Caco-2 (cell line): ENCODE measurements at regions of chr4 and their contacts with region 1.

Region 1: DNA sequence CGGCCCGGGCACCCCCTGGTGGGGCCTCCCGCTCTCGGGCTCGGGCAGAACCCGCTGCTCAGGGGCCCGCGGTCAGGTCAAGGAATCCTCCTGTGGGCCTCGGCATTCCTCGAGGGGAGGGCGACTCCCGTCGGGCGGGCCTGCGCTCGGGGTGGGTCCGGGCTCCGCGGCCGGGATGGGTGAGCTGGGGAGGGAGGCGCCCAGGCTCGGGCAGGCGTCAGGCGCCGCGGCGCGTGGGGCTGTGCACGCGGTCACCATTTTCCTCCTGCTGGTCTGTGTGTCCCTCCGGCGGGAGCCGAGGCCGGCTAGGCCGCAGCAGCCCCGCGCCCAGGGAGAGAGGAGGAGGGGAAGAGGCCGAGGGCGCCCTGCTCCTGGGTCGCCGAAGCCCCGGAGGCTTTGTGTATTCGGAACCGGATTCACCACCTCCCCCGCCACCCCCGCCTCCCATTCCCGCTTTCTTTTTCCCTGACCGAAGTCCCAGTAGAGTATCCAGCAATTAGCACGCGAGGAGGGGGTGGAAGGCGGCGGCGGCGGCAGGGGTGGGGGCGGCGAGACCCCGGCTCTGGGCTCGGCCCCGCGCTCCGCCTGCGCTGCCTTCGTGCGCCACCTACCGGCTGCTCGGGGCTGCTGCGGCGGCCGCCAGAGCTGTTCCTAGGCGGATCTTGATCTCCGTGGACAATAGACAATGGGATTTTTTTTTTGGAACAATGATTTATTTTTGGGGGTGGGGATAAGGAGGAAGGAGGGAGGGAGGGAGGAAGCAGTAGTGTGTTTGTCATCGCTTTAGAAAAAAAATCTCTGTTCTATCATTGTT is 99.0 kb upstream of the MAML3 start:
- DNase-seq: peak; percentile 82 to 87
- H3K4me3 ChIP-seq: peak overlapping the region; percentile 66
- H3K4me3 Mint-ChIP-seq: peak overlapping the region; percentile 0
- H3K27ac Mint-ChIP-seq: peak overlapping the region; percentile 88
- H3K4me1 ChIP-seq: peaks cover 58% of the 10 kb centered on the region
- H3K4me1 Mint-ChIP-seq: peaks cover 26% of the 10 kb centered on the region
- H3K27me3 ChIP-seq: no peaks in the 10 kb centered on the region
- H3K27me3 Mint-ChIP-seq: no peaks in the 10 kb centered on the region
- CTCF ChIP-seq: peak; percentile 79 to 90

Region 2: DNA sequence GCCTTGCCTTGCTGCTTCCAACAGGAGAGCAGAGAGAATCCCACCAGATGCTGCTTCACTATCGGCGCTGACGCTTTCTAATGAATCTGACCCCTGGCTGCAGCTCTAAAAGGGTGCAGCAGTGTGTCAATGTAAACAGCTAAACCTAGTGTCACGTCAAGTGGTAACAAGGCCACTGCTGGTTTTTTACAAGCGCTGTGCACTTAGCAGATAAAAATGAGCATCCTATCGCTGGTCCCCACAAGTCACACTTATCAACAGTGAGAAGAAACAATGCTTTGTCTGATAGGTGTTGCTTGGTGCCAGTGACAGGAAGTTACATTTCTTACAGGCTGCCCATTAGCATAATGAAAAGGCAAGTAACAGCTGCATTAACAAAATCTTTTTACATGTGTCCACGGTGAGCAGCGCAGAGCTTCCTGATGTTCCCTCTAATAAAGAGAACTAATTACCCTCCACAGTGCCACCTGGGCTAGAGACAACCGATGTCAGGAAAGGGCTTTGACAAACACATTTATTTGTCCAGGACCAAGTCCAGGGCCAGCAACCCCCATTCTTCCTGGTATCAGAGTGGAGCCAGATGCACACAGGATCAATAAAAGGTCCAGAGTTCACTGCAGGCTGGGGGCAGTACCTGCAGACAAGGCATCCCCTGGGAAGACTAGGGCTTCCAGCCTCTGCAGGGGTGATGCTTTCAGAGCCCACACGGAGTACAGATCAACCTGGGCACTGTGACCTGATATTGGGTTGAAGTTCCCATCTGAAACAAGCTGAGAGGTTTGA is 411.3 kb before region 1 on chr4:
- CTCF ChIA-PET with region 1: no interaction called
- POLR2A ChIA-PET with region 1: no interaction called
- intact Hi-C with region 1: loop called (anchors 10 kb)
- DNase-seq: peak; percentile 56 to 71
- H3K4me3 ChIP-seq: no peak overlapping the region
- H3K4me3 Mint-ChIP-seq: peak overlapping the region; percentile 13
- H3K27ac Mint-ChIP-seq: no peak overlapping the region
- H3K4me1 ChIP-seq: peaks cover 16% of the 10 kb centered on the region
- H3K4me1 Mint-ChIP-seq: peaks cover 15% of the 10 kb centered on the region
- H3K27me3 ChIP-seq: no peaks in the 10 kb centered on the region
- H3K27me3 Mint-ChIP-seq: no peaks in the 10 kb centered on the region
- CTCF ChIP-seq: peak in 1 of 2 experiments; percentile 26

Region 3: GRCh38 chr4:140012688-140013486 is 240.1 kb before region 1 on chr4:
- CTCF ChIA-PET with region 1: interaction called, 23 read pairs
- POLR2A ChIA-PET with region 1: interaction called, 4 read pairs
- intact Hi-C with region 1: loop called (anchors 1 kb)
- DNase-seq: peak; percentile 69 to 77
- H3K4me3 ChIP-seq: no peak overlapping the region
- H3K4me3 Mint-ChIP-seq: peak overlapping the region; percentile 0
- H3K27ac Mint-ChIP-seq: peak overlapping the region; percentile 23
- H3K4me1 ChIP-seq: peaks cover 18% of the 10 kb centered on the region
- H3K4me1 Mint-ChIP-seq: peaks cover 30% of the 10 kb centered on the region
- H3K27me3 ChIP-seq: no peaks in the 10 kb centered on the region
- H3K27me3 Mint-ChIP-seq: no peaks in the 10 kb centered on the region
- CTCF ChIP-seq: peak; percentile 56 to 65

Region 4: GRCh38 chr4:140144917-140145316 is 108.0 kb before region 1 on chr4:
- CTCF ChIA-PET with region 1: no interaction called
- POLR2A ChIA-PET with region 1: no interaction called
- intact Hi-C with region 1: no loop called
- DNase-seq: no peak
- H3K4me3 ChIP-seq: no peak overlapping the region
- H3K4me3 Mint-ChIP-seq: no peak overlapping the region
- H3K27ac Mint-ChIP-seq: no peak overlapping the region
- H3K4me1 ChIP-seq: peaks cover 30% of the 10 kb centered on the region
- H3K4me1 Mint-ChIP-seq: peaks cover 31% of the 10 kb centered on the region
- H3K27me3 ChIP-seq: no peaks in the 10 kb centered on the region
- H3K27me3 Mint-ChIP-seq: no peaks in the 10 kb centered on the region
- CTCF ChIP-seq: no peak

Region 5: DNA sequence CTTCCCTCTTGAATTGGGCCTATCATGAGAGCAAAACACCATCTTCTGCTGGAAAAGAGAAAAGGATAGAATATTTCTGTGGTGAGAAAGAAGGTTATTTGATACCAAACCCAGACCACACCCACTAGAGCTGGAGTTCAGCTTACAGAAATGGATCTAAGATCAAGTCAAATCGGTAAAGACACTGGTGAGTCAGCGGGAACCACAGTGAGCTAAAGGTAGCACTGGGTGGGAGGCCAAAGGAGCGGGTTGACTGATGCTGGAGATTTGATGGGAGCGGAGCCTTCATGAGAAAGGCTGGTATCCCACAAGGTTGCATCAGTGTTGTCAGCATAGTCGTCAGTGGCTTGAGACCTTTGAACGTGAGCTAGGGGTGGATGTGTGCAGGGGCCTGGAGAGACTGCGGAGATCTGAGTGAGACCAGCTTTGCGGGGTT is 14.1 kb after region 1 on chr4:
- CTCF ChIA-PET with region 1: no interaction called
- POLR2A ChIA-PET with region 1: no interaction called
- intact Hi-C with region 1: no loop called
- DNase-seq: no peak
- H3K4me3 ChIP-seq: no peak overlapping the region
- H3K4me3 Mint-ChIP-seq: no peak overlapping the region
- H3K27ac Mint-ChIP-seq: peak overlapping the region; percentile 42
- H3K4me1 ChIP-seq: no peaks in the 10 kb centered on the region
- H3K4me1 Mint-ChIP-seq: no peaks in the 10 kb centered on the region
- H3K27me3 ChIP-seq: no peaks in the 10 kb centered on the region
- H3K27me3 Mint-ChIP-seq: no peaks in the 10 kb centered on the region
- CTCF ChIP-seq: no peak